Esophagus squamous epithelium (tissue), 5 donors: ENCODE measurements at regions of chr3 and their contacts with region 1.

Region 1: GRCh38 chr3:45499529-45499928 is 95.0 kb upstream of the LIMD1 start:
- DNase-seq: no peak
- H3K4me3 ChIP-seq: no peak overlapping the region
- H3K27ac ChIP-seq: no peak overlapping the region
- H3K4me1 ChIP-seq: peaks cover 0 to 8% (median 0%) of the 10 kb centered on the region in 3 donors
- H3K27me3 ChIP-seq: no peaks in the 10 kb centered on the region
- CTCF ChIP-seq: peak in 4 of 6 experiments; percentile 37 to 72 (median 58)
- POLR2A ChIP-seq: no peak

Region 2: DNA sequence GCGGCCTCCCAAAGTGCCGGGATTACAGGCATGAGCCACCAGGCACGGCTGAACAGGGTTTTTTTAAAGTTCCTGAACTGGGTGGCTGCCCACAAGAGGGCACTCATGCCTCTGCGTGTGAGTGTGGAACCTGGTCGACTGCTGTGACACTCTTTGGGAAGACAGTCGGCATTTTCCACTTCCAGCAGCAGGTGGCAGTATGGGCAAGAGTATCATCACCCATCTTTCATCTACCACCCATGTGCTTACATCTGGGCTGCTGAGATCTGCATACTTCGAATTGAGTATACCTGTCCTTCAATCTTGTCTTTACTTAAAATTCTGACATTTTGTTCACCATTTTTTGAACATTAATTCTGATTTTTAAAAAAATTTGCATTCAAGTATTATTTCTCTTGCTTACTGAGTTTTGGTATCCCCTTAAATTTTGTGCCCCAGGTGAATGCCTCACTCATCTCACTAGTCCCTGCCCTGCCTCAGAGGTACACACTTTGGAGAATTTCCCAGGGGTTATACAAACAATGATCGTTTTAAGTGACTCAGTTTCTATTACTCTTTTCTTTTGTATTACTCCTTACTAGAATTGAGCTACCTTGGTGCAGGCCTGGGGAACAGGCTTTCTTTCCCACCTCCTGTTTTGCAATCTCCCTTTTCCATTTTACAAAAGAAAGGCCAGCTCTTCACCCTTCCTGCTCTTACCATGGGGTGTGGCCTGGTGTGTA is 461.6 kb before region 1 on chr3:
- intact Hi-C with region 1: loop called (anchors 5 kb)
- DNase-seq: peak; percentile 61
- H3K4me3 ChIP-seq: peak overlapping the region in 1 of 4 donors; percentile 45
- H3K27ac ChIP-seq: peak overlapping the region in 3 of 4 donors; percentile 34 to 60 (median 57)
- H3K4me1 ChIP-seq: peaks cover 11 to 58% (median 50%) of the 10 kb centered on the region in 3 donors
- H3K27me3 ChIP-seq: peaks cover 0 to 14% (median 0%) of the 10 kb centered on the region in 4 donors
- CTCF ChIP-seq: peak; percentile 87 to 99 (median 98)
- POLR2A ChIP-seq: no peak

Region 3: GRCh38 chr3:45224824-45225464 is 274.6 kb before region 1 on chr3:
- intact Hi-C with region 1: loop called (anchors 10 kb)
- DNase-seq: no peak
- H3K4me3 ChIP-seq: peak overlapping the region; percentile 37 to 82 (median 56)
- H3K27ac ChIP-seq: peak overlapping the region; percentile 18 to 84 (median 52)
- H3K4me1 ChIP-seq: peaks cover 6 to 38% (median 9%) of the 10 kb centered on the region in 3 donors
- H3K27me3 ChIP-seq: peaks cover 0 to 79% (median 6%) of the 10 kb centered on the region in 4 donors
- CTCF ChIP-seq: peak in 4 of 6 experiments; percentile 26 to 55 (median 40)
- POLR2A ChIP-seq: no peak

Region 4: GRCh38 chr3:45269952-45270351 is 229.6 kb before region 1 on chr3:
- intact Hi-C with region 1: no loop called
- DNase-seq: no peak
- H3K4me3 ChIP-seq: no peak overlapping the region
- H3K27ac ChIP-seq: no peak overlapping the region
- H3K4me1 ChIP-seq: no peaks in the 10 kb centered on the region
- H3K27me3 ChIP-seq: peaks cover 0 to 4% (median 0%) of the 10 kb centered on the region in 4 donors
- CTCF ChIP-seq: no peak
- POLR2A ChIP-seq: no peak